MCF 10A (cell line): ENCODE measurements at regions of chr4 and their contacts with region 1.

Region 1: DNA sequence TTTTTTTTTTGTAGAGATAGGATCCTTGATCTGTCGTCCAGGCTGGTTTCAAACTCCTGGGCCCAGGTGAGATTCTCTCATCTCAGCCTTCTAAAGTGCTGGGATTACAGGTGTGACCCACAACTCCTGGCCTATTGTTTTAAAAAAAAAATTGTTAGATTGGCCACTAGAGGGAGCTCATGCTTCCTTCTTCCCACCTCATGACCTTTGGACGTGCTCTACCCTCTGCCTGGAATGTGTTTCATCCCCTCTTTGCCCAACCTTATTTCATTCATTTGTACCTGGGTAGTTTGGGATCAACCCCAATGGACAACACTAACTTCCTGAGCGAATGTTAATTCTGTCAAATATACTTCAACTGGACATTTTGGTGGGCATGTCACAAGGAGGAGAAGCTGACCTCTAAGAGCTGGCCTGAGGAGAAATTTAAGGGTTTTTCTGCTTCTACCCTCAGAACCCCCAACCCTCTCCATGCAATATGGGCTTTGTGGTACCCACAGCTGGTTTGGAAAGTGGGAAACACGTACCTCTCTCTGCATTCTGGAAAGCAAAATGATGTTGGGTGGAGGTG is 6.4 kb downstream of the PPEF2 start:
- DNase-seq: peak; percentile 54
- H3K4me3 Mint-ChIP-seq: no peak overlapping the region
- H3K27ac Mint-ChIP-seq: no peak overlapping the region
- H3K4me1 Mint-ChIP-seq: no peaks in the 10 kb centered on the region
- H3K27me3 Mint-ChIP-seq: no peaks in the 10 kb centered on the region
- CTCF ChIP-seq: peak; percentile 65

Region 2: DNA sequence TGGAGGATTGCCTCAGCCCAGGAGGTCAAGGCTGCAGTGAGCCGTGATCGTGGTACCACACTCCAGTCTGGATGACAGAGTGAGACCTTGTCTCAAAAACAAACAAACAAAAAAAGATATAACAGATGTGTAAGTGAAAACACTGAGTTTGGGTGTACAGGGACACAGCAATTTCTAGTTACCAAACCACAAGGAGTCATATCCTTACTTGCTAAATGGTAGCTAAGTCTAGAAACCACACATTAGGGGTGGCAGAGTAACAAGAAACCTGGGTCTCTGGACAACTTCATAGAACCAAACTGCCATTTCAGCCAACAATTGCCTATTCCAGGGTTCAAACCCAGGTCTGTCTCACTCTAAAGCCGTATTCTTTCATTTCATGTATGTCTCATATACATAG is 14.4 kb before region 1 on chr4:
- CTCF ChIA-PET with region 1: interaction called, 12 read pairs
- POLR2A ChIA-PET with region 1: interaction called, 3 read pairs
- intact Hi-C with region 1: no loop called
- DNase-seq: no peak
- H3K4me3 Mint-ChIP-seq: no peak overlapping the region
- H3K27ac Mint-ChIP-seq: no peak overlapping the region
- H3K4me1 Mint-ChIP-seq: no peaks in the 10 kb centered on the region
- H3K27me3 Mint-ChIP-seq: peaks cover 28% of the 10 kb centered on the region
- CTCF ChIP-seq: no peak

Region 3: GRCh38 chr4:75908555-75908954 is 12.7 kb after region 1 on chr4:
- CTCF ChIA-PET with region 1: interaction called, 66 read pairs
- POLR2A ChIA-PET with region 1: interaction called, 9 read pairs
- intact Hi-C with region 1: no loop called
- DNase-seq: no peak
- H3K4me3 Mint-ChIP-seq: no peak overlapping the region
- H3K27ac Mint-ChIP-seq: no peak overlapping the region
- H3K4me1 Mint-ChIP-seq: peaks cover 6% of the 10 kb centered on the region
- H3K27me3 Mint-ChIP-seq: no peaks in the 10 kb centered on the region
- CTCF ChIP-seq: no peak

Region 4: GRCh38 chr4:75916091-75916661 is 20.3 kb after region 1 on chr4:
- CTCF ChIA-PET with region 1: interaction called, 66 read pairs
- POLR2A ChIA-PET with region 1: no interaction called
- intact Hi-C with region 1: no loop called
- DNase-seq: peak; percentile 35
- H3K4me3 Mint-ChIP-seq: no peak overlapping the region
- H3K27ac Mint-ChIP-seq: peak overlapping the region; percentile 31
- H3K4me1 Mint-ChIP-seq: no peaks in the 10 kb centered on the region
- H3K27me3 Mint-ChIP-seq: no peaks in the 10 kb centered on the region
- CTCF ChIP-seq: peak; percentile 79

Region 5: DNA sequence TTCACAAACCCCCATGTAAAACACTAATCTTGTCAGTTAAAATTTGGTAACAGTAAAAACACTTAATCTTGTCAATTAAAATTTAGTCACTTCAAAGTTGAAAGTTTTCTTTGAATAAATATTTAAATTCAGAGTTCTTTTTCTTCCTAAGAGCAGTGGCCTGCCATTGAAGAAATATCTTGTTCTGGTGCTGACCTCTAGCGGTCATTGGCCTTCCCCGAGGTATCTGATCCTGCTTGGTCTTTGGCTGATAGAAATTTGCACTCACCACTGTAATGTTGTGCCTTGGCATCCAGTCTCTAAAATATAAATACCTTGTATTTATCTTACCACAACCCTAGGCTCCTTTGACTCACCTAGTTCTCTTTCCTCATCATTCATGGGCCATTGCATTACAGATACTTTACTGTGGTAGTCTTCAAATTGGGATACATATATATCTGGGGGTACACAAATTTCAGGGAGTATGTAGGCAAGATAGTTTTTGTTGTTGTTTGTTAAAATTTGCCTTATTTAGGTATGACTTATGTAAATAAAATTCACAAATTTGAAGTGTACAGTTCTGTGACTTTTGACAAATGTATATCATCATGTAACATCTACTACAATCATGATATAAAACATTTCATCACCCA is 171.9 kb after region 1 on chr4:
- CTCF ChIA-PET with region 1: interaction called, 4 read pairs
- POLR2A ChIA-PET with region 1: no interaction called
- intact Hi-C with region 1: loop called (anchors 1 kb)
- DNase-seq: peak; percentile 83
- H3K4me3 Mint-ChIP-seq: no peak overlapping the region
- H3K27ac Mint-ChIP-seq: no peak overlapping the region
- H3K4me1 Mint-ChIP-seq: no peaks in the 10 kb centered on the region
- H3K27me3 Mint-ChIP-seq: no peaks in the 10 kb centered on the region
- CTCF ChIP-seq: peak; percentile 65